ENCODE measurements at regions of chr10 and their contacts with region 1.

Region 1: DNA sequence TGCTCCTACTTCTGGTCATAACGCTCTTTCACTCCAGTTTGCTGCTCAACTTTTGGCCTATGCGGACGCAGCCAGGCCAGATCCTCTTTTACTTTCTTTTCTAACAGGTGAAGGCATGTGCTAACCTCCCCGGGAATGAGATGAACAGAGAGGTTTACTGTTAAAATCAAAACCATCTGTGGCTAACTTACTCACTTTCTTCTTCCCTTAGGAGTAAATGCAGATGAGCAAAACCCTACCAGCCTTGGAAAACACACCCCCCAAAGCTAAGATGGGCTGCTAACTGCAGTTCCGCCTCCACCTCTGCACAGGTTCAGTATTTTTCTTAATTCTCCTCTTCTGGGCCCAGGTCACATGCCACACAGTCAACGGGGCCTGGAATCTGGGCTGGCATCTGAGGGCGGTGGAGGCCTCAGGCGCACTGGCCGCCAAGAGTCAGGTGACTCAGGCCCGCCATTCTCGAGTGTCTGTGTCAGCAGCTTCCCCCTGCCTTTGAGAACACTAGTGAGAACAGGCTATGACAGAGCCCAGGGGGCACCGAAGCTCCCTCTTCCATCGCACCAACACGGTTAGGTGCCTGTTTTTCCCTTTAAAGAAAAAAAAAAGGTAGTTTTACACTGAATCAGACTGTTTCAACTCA is 11.1 kb downstream of the FAM53B start:
- DNase-seq: peak in 1 of 2 donors; percentile 87
- H3K4me3 ChIP-seq: no peak overlapping the region
- CTCF ChIP-seq: no peak
- POLR2A ChIP-seq: no peak

Region 2: DNA sequence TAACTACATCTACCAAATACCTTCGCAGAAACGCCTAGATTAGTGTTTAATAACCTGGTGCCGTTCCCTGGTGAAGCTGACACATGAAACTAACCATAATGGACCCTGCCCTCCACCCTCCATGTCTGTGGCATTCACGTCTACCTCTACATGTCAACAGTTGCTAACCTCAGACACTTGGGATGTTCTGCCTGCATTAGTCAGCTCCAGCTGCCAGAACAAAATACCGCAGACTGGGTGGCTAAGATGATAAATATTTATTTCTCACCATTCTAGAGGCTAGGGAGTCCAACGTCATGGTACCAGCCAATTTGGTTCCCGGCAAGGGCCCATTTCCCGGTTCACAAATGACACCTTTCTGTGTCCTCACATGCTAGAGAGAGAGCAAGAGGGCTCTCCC is 521.1 kb before region 1 on chr10:
- intact Hi-C with region 1: no loop called
- DNase-seq: peak in 1 of 2 donors; percentile 36
- H3K4me3 ChIP-seq: no peak overlapping the region
- CTCF ChIP-seq: no peak
- POLR2A ChIP-seq: no peak

Region 3: DNA sequence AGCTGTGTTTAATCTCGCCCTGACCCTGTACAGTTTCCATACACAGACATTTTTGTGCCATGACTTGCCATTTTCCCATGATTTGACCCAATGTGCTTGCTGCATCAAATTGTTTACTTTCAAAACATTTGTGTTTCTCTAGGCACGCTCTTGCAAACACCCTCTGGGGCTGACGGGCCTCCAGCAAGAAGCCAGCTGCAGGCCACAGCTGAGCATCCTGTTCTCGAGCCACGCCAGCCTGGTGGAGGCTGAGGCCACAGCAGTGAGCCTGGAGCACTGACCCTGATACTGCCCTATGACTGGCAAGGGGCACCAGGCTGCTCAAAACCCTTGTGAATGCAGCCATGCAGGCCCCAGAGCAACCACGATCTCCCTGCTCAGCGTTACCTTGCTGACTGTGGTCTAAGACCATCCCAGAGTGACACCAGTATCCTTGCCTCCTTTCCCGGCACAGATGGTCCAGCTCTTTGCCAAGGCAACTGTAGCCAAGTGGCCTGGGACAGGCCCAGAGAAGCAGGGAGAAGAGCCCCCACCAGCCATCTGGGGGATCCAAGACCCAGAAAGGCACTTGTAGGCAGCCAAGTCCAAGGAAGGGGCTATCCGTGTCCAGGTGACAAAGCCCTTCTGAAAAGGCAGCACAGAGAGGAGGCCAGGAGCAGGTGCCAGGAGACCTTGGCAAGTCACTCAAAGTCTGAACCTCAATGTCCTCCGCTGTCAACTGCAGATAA is 392.9 kb before region 1 on chr10:
- intact Hi-C with region 1: no loop called
- DNase-seq: peak in 1 of 2 donors; percentile 59
- H3K4me3 ChIP-seq: no peak overlapping the region
- CTCF ChIP-seq: no peak
- POLR2A ChIP-seq: no peak

Region 4: GRCh38 chr10:124626759-124627380 is 106.2 kb before region 1 on chr10:
- intact Hi-C with region 1: loop called (anchors 10 kb)
- DNase-seq: no peak
- H3K4me3 ChIP-seq: no peak overlapping the region
- CTCF ChIP-seq: no peak
- POLR2A ChIP-seq: no peak

Region 5: DNA sequence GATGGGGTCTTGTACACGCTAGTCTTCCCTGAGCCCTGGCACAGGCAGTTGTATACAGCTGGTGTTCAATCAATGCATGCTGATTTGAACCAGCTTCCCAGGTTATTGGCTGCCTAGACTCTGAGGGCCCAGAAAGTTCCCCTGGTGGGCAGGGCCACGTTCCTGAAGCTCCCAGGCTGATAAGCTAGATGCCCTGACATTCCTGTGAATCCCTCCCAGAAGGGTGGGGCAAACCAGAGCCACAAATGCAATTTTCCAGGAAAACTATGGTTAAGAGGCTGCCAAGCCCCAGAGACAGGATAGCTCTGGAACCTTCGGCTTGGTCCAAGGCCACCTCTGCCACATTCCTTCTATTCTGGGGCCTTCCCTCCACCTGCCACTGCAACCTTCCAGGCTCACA is 67.1 kb before region 1 on chr10:
- intact Hi-C with region 1: no loop called
- DNase-seq: no peak
- H3K4me3 ChIP-seq: no peak overlapping the region
- CTCF ChIP-seq: no peak
- POLR2A ChIP-seq: no peak

Region 6: GRCh38 chr10:124802313-124802675 is 69.2 kb after region 1 on chr10:
- intact Hi-C with region 1: no loop called
- DNase-seq: no peak
- H3K4me3 ChIP-seq: peak overlapping the region; percentile 96
- CTCF ChIP-seq: no peak
- POLR2A ChIP-seq: no peak